HAP-1 (cell line): ENCODE measurements at regions of chr6 and their contacts with region 1.

Region 1: GRCh38 chr6:149431905-149432775 is 32.1 kb downstream of the SUMO4 start:
- DNase-seq: peak; percentile 67 to 95
- H3K4me3 ChIP-seq: no peak overlapping the region
- H3K4me1 ChIP-seq: no peaks in the 10 kb centered on the region
- H3K27me3 ChIP-seq: no peaks in the 10 kb centered on the region

Region 2: DNA sequence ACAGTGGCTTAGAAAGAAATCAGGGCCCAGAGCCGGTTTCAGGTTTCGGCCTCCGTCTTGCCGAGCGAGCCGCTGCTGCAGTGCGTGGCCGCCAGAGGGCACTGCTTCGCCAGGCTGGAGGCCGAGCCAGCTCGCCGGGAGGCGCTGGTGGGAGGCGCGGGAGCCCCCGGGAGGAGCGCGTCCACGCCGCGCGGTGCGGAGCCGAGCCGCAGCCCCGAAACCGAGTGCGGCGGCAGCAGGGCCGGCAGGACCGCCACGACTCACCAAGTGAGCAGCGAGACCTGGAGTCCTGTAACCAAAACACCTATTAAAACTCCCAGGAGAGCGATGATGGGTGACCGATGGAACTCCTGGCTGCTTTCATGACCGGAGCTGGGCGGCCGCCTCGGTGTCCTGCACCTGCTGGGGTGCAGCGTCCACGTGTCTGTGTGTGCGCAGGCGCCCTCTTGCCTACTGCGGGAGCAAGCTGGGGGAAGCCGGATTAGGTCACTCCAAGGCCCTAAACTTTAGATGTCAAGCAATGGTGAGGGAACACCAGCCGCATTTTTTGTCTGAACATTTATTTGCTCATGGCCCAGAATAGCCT is 872.2 kb before region 1 on chr6:
- in situ Hi-C with region 1: loop called (anchors 25 kb)
- DNase-seq: peak; percentile 63 to 84
- H3K4me3 ChIP-seq: peak overlapping the region; percentile 29
- H3K4me1 ChIP-seq: peaks cover 4% of the 10 kb centered on the region
- H3K27me3 ChIP-seq: no peaks in the 10 kb centered on the region

Region 3: GRCh38 chr6:148746363-148747144 is 685.6 kb before region 1 on chr6 and contains the start of gene UST:
- in situ Hi-C with region 1: loop called (anchors 25 kb)
- DNase-seq: peak; percentile 95 to 97
- H3K4me3 ChIP-seq: peak within 1 kb of the TSS; percentile 87
- H3K4me1 ChIP-seq: peaks cover 17% of the 10 kb centered on the region; the same call in 1 of the 2 replicates
- H3K27me3 ChIP-seq: no peaks in the 10 kb centered on the region

Region 4: DNA sequence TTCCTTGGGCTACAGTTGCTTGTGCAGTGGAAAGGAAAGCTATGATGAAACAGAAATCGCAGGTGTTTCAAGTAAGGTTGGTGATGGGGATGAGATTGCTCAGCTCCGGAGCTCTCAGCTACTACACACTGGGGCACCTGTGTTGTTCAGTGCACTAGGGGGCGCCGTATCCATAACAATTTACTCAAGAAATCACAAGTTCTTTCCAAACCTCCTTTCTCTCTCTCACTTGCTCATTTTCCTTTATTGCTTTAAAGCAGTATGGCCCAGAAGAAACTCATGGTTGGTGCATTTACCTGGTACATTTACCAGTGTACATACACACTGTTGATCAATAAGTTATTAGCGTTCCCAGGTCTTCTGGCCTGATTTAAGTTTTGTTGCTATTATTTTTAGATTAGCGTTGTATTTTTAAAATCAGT is 349.8 kb before region 1 on chr6:
- in situ Hi-C with region 1: loop called (anchors 5 kb)
- DNase-seq: peak; percentile 66 to 87
- H3K4me3 ChIP-seq: no peak overlapping the region
- H3K4me1 ChIP-seq: no peaks in the 10 kb centered on the region; the same call in 1 of the 2 replicates
- H3K27me3 ChIP-seq: peaks cover 2% of the 10 kb centered on the region; the same call in 1 of the 2 replicates

Region 5: DNA sequence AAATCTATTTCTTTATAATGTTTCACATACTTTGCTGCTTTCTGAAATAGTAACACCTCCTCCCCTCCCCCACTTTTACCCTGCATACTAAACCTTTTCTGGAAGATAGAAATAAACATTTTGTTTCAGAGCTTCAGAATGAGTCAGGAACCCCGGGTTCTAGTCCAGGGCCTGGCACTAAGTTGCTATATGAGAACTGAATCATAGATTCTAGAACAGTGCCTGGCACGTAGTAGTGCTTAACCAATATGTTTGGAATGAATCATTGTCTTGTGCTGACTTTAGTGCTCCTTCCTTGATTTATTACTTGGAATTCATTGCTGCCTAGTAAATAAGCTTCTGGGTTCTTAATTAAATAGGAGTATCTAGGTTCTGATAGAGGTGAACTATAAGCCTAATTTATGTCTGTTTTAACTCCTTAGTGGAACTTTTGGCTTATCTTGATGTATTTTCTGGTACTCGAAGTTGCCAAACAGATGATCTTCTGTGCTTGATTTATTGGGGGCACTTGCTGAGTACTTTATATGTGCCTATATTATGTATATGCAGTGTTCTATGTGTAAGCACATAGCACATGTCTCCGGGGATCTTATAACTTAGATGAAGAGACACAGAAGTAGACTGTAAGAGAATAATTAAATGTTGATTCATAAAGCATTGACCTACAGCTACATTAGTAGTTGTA is 96.1 kb before region 1 on chr6:
- in situ Hi-C with region 1: no loop called
- DNase-seq: no peak
- H3K4me3 ChIP-seq: no peak overlapping the region
- H3K4me1 ChIP-seq: peaks cover 47% of the 10 kb centered on the region
- H3K27me3 ChIP-seq: no peaks in the 10 kb centered on the region